ENCODE measurements at regions of chr20 and their contacts with region 1.

Region 1: GRCh38 chr20:815914-816606 is 17.5 kb upstream of the FAM110A start:
- DNase-seq: no peak
- H3K4me3 ChIP-seq: no peak overlapping the region
- H3K27ac ChIP-seq: no peak overlapping the region
- H3K4me1 ChIP-seq: no peaks in the 10 kb centered on the region
- H3K27me3 ChIP-seq: peaks cover 0 to 41% (median 0%) of the 10 kb centered on the region in 4 donors
- CTCF ChIP-seq: peak; percentile 94 to 99 (median 96)
- POLR2A ChIP-seq: no peak

Region 2: GRCh38 chr20:916125-916799 is 100.2 kb after region 1 on chr20 and contains the start of gene ANGPT4:
- intact Hi-C with region 1: no loop called
- DNase-seq: no peak
- H3K4me3 ChIP-seq: no peak within 1 kb of the TSS
- H3K27ac ChIP-seq: no peak within 1 kb of the TSS
- H3K4me1 ChIP-seq: peaks cover 0 to 7% (median 0%) of the 10 kb centered on the region in 3 donors
- H3K27me3 ChIP-seq: peaks cover 0 to 41% (median 0%) of the 10 kb centered on the region in 4 donors
- CTCF ChIP-seq: no peak
- POLR2A ChIP-seq: no peak
- total RNA-seq, gene ANGPT4: under 0.01 to 0.38 (median 0.09) TPM in 3 of 4 donors, not detected in the other

Region 3: DNA sequence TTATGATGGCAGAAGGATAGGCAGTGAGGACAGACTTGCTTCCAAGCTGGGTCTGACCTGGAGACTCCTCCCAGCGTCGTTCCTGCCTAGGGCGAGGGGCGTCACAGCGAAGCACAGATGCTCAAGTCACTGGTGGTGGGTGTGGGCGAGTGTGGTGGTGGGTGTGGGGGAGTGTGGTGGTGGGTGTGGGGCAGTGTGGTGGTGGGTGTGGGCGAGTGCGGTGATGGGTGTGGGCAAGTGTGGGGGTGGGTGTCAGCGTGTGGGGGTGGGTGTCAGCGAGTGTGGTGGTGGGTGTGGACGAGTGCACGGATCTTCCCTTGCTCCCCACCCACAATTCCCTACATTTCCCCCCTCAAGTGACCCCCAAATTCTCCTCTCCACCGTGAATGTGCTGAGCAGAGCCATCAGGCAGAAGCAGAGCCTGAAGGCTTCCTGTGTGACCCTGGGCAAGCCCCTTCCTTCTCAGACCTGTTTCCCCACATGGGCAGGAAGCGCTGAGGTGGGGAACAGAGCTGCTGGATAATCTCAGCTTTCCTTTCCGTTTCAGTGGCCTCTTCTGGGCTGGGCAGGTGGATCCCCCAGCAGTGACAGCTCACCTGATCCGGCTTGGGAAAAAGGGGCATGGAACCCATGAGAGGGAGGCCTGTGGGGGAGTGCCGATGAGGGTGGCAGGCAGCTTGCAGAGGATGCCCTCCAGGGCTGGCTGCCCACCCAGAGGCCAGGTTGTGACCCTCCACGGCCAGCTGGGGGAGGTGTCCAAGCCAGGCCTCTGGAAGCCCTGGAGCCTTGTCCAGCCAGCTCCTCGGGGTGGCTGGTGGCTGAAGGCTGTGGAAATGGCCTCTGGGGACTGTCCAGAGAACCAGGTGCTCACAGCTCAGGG is 143.1 kb after region 1 on chr20:
- intact Hi-C with region 1: loop called (anchors 2 kb)
- DNase-seq: no peak
- H3K4me3 ChIP-seq: no peak overlapping the region
- H3K27ac ChIP-seq: no peak overlapping the region
- H3K4me1 ChIP-seq: peaks cover 0 to 6% (median 0%) of the 10 kb centered on the region in 3 donors
- H3K27me3 ChIP-seq: peaks cover 0 to 76% (median 0%) of the 10 kb centered on the region in 4 donors
- CTCF ChIP-seq: no peak
- POLR2A ChIP-seq: no peak

Measured in esophagus squamous epithelium (tissue), 5 donors.